SK-N-SH (cell line): ENCODE measurements at regions of chr2 and their contacts with region 1.

Region 1: GRCh38 chr2:9205963-9206948 is at the start of gene ASAP2:
- DNase-seq: peak; percentile 99
- H3K4me3 ChIP-seq: peak within 1 kb of the TSS; percentile 90 to 98
- H3K27ac ChIP-seq: peak within 1 kb of the TSS; percentile 84 to 93
- H3K4me1 ChIP-seq: peaks cover 8 to 24% of the 10 kb centered on the region in 2 experiments
- H3K27me3 ChIP-seq: no peaks in the 10 kb centered on the region
- CTCF ChIP-seq: peak; percentile 90
- EP300 ChIP-seq: no peak
- RAD21 ChIP-seq: peak; percentile 72
- polyA plus RNA-seq, gene ASAP2: 37.9 and 41.4 TPM in 2 replicates

Region 2: GRCh38 chr2:9192712-9193111 is 13.5 kb before region 1 on chr2:
- CTCF ChIA-PET with region 1: interaction called, 12 read pairs
- POLR2A ChIA-PET with region 1: no interaction called
- DNase-seq: no peak
- H3K4me3 ChIP-seq: no peak overlapping the region
- H3K27ac ChIP-seq: peak overlapping the region in 1 of 2 experiments; percentile 95; a peak in 2 of 4 replicates
- H3K4me1 ChIP-seq: peaks cover 13 to 42% of the 10 kb centered on the region in 2 experiments; a peak in 3 of 4 replicates
- H3K27me3 ChIP-seq: no peaks in the 10 kb centered on the region
- CTCF ChIP-seq: no peak
- EP300 ChIP-seq: no peak
- RAD21 ChIP-seq: no peak

Region 3: DNA sequence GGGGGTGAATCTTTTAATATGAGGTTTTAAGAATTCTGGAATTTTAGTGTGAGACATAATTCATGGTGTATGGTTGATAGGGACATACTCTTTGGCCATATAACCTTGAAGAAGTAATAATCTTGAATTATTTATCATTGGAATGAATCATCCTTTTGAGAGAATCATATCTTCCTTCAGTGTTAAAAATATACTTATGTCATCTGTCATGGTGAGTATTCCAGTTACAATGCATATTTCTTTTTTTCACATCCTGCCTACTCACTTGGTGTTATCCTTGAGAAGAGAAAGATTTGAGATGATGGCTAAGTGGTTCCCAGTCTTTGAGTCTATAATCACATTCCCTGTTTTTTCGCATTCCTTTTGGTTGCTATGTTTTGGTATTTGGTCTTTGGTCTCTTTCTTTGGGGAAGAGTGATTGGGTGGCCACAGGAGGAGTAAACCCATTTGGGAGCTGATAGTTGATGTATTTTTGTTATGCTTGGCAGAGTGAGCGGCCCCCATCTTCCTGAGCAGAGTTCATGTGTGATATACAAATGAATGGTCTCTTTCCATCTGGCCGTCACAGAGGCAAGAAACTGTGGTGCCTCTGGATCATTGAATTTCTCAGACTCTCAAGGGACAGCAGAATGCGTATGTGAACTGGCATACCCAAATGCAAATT is 22.0 kb after region 1 on chr2:
- CTCF ChIA-PET with region 1: interaction called, 93 read pairs
- POLR2A ChIA-PET with region 1: interaction called, 3 read pairs
- DNase-seq: no peak
- H3K4me3 ChIP-seq: no peak overlapping the region
- H3K27ac ChIP-seq: peak overlapping the region; percentile 99 to 100
- H3K4me1 ChIP-seq: peaks cover 74 to 90% of the 10 kb centered on the region in 2 experiments
- H3K27me3 ChIP-seq: no peaks in the 10 kb centered on the region
- CTCF ChIP-seq: no peak
- EP300 ChIP-seq: peak; percentile 69 to 95
- RAD21 ChIP-seq: no peak

Region 4: DNA sequence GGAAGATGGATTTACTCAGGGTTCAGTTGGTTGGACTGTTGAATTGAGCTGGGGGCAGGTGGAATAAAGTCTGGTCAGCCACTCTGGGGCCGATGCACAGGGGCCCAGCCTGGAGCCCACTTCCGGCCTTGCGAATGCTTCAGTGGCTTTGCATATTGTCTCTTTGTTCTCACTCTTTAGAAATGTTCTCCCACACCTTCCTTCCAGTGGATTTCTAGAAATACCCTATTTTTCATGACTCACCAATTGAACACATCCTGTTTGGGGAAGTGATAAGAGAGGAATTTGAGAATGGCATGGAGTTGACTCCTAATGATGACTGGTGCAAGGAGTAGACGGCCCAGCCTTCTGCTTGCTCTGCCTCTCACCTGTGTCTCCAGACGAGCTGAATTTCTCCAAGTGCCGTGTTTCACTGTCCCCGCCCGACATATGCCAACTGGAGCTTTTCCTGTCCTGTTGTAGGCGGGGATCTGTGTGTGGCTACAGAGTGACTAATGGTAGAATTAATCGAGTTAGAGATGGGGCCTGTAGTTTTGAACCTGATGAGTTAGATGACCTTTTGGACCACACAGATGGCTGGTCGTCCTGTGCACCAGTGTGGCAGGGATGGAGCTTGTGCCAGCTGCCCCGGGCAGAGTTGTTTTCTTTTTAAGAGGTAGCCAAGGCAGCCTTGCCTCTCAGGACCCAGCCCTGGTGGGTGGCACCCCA is 28.6 kb after region 1 on chr2:
- CTCF ChIA-PET with region 1: interaction called, 93 read pairs
- POLR2A ChIA-PET with region 1: interaction called, 9 read pairs
- DNase-seq: peak; percentile 87
- H3K4me3 ChIP-seq: peak overlapping the region; percentile 29 to 44; a peak in 3 of 4 replicates
- H3K27ac ChIP-seq: peak overlapping the region; percentile 99 to 100
- H3K4me1 ChIP-seq: peaks cover 90 to 99% of the 10 kb centered on the region in 2 experiments
- H3K27me3 ChIP-seq: no peaks in the 10 kb centered on the region
- CTCF ChIP-seq: no peak
- EP300 ChIP-seq: peak; percentile 96 to 97
- RAD21 ChIP-seq: peak; percentile 10; the same call in 1 of the 2 replicates

Region 5: DNA sequence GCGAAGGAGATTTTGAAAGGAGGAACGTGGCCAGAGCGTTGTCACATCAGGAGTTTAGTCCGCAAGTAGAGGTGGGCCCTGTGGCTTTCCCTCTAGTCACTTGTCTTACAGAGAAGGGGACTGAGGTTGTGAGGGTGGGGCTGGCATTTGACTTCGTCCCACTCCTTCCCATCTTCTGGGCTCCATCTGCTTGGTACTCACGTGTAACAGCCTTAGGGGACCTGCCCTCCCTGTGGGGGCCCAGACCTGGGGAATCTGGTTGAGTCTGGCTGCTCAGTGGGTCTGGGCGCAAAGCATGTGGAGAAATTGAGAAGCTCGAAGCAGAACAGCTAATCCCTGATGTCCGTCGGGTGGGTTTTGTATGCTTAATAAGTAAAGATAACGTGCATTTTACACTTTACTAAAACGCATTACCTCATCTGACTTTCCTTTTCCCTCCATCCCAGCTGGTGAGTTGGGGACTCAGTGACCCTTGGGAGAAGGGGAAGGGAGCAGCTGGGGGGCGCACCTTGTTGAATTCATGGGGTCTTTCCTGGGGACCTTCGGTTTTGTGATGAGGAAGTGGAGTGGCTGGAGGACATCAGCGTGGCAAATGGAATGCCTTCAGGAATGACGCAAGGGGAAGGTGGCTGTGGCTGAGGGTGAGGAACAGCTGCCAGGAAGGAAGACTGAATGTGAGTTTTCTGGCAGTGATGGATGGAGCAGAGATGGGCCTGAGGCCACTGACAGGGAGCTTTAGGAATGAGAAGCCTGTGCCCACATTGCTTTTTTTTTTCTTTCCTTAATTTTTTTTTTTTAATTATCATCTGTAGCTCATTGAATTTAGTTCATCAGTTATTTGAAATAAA is 45.1 kb after region 1 on chr2:
- CTCF ChIA-PET with region 1: interaction called, 26 read pairs
- POLR2A ChIA-PET with region 1: interaction called, 8 read pairs
- DNase-seq: no peak
- H3K4me3 ChIP-seq: no peak overlapping the region
- H3K27ac ChIP-seq: peak overlapping the region; percentile 89 to 100
- H3K4me1 ChIP-seq: peaks cover 73 to 75% of the 10 kb centered on the region in 2 experiments
- H3K27me3 ChIP-seq: no peaks in the 10 kb centered on the region
- CTCF ChIP-seq: no peak
- EP300 ChIP-seq: peak; percentile 68 to 76; a peak in 3 of 4 replicates
- RAD21 ChIP-seq: no peak

Region 6: DNA sequence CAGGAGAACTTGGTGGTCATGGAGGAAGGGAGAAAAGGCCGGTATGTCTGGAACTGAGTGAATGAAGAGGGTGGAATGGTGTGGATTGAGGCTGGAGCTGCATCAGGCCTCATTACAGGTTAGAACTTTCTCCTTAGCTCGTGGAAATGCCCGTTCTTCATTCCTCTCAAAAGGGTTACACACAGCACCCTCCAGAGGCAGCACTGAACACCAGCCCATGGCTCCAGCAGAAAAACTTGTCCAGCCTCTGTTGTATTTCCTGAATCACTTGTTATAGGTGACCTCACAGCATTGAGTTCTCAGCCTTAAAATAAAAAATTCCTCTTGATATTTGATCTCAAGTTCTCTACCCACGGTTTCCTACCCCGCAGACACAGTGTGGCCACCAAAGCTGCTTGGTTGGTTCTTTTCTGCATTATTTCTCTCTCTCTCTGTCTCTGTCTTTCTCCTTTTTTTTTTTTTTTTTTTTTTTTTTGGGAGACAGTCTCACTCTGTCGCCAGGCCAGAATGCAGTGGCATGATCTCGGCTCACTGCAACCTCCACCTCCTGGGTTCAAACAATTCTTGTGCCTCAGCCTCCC is 127.4 kb after region 1 on chr2:
- CTCF ChIA-PET with region 1: interaction called, 21 read pairs
- POLR2A ChIA-PET with region 1: no interaction called
- DNase-seq: peak; percentile 70
- H3K4me3 ChIP-seq: no peak overlapping the region
- H3K27ac ChIP-seq: peak overlapping the region; percentile 7 to 45
- H3K4me1 ChIP-seq: peaks cover 26 to 39% of the 10 kb centered on the region in 2 experiments
- H3K27me3 ChIP-seq: no peaks in the 10 kb centered on the region
- CTCF ChIP-seq: peak; percentile 91
- EP300 ChIP-seq: no peak
- RAD21 ChIP-seq: peak; percentile 90

Region 7: GRCh38 chr2:9373077-9373875 is 167.0 kb after region 1 on chr2:
- CTCF ChIA-PET with region 1: interaction called, 17 read pairs
- POLR2A ChIA-PET with region 1: no interaction called
- DNase-seq: no peak
- H3K4me3 ChIP-seq: no peak overlapping the region
- H3K27ac ChIP-seq: no peak overlapping the region; a peak in 1 of 4 replicates
- H3K4me1 ChIP-seq: peaks cover 0 to 25% of the 10 kb centered on the region in 2 experiments; a peak in 3 of 4 replicates
- H3K27me3 ChIP-seq: no peaks in the 10 kb centered on the region
- CTCF ChIP-seq: no peak
- EP300 ChIP-seq: no peak
- RAD21 ChIP-seq: no peak